Psoas muscle (tissue), 8 donors: ENCODE measurements at regions of chr11 and their contacts with region 1.

Region 1: GRCh38 chr11:46755962-46756361 is 36.9 kb downstream of the F2 start:
- DNase-seq: no peak
- ATAC-seq: no peak
- H3K4me3 ChIP-seq: no peak overlapping the region
- H3K27ac ChIP-seq: no peak overlapping the region
- H3K4me1 ChIP-seq: no peaks in the 10 kb centered on the region
- H3K27me3 ChIP-seq: no peaks in the 10 kb centered on the region
- CTCF ChIP-seq: no peak

Region 2: GRCh38 chr11:46669711-46670139 is 86.2 kb before region 1 on chr11:
- intact Hi-C with region 1: loop called (anchors 5 to 10 kb)
- DNase-seq: no peak
- ATAC-seq: peak; percentile 38 to 70 (median 61)
- H3K4me3 ChIP-seq: no peak overlapping the region
- H3K27ac ChIP-seq: no peak overlapping the region
- H3K4me1 ChIP-seq: peaks cover 4% of the 10 kb centered on the region
- H3K27me3 ChIP-seq: no peaks in the 10 kb centered on the region
- CTCF ChIP-seq: peak; percentile 43

Region 3: DNA sequence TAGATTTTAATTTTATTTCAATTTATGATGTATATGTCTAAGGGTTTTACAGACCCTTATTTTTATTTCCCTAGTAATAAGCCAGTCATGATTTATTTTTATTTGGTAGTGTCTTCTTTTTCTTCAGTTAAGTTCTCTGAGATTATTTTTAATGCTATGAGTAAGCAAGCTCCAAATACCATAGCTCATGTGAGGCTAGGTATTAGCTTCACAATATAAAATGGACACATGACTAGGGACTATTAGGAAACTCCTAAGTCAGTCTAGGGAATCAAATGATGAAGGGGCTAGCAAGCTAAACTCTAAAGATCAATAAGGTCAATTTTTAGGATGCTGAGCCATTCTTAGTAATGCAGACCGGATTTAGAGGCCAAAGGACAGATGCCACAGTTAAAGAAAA is 44.2 kb after region 1 on chr11:
- intact Hi-C with region 1: loop called in 1 of 2 experiments (anchors 5 kb)
- DNase-seq: no peak
- ATAC-seq: peak; percentile 96 to 98 (median 97)
- H3K4me3 ChIP-seq: no peak overlapping the region
- H3K27ac ChIP-seq: peak overlapping the region; percentile 67
- H3K4me1 ChIP-seq: peaks cover 18% of the 10 kb centered on the region
- H3K27me3 ChIP-seq: no peaks in the 10 kb centered on the region
- CTCF ChIP-seq: no peak